Aorta (tissue), 5 donors: ENCODE measurements at regions of chr4 and their contacts with region 1.

Region 1: DNA sequence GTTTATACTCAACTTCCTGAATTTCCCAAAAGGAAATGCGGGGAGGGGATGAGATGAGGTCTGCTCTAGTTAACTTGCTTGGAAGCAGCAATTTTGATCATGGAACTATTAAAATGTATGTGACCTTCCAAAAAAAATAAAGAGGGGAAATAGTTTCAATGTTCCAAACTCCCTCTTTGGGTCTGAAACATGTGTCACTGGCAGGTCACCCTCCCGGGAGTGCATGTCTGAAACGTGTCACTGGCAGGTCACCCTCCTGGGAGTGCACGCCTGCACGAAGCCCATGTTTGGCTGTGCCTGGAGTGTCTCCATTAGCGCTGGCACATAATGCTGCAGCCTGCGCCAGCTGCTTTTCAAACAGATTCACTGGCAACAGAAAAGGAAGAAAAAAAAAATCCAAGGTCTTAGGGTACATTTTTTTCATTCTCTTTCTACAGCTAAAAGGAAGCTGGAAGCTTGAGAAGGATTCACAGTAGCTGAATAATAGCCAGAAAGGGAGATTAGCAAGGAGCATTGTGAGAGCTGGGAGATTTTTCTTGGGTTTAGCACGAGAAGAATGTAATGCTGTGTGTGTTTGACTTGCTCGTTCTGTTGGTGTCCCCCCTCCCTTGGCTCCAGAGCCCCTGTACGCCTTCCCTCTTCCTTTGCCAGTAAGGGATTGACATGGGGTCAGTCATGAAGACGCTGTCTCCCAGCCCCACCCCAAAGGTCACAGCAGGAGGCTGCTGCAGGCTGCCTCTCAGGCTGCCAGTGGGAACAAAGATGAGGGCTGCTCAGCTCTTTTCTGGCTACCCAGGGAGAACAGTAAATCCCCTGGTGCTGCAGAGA is 39.2 kb upstream of the TLR3 start:
- DNase-seq: peak; percentile 92 to 94
- ATAC-seq: peak; percentile 94
- H3K4me3 ChIP-seq: no peak overlapping the region
- H3K27ac ChIP-seq: peak overlapping the region; percentile 70 to 80
- H3K4me1 ChIP-seq: peaks cover 5 to 6% of the 10 kb centered on the region in 2 donors
- H3K27me3 ChIP-seq: no peaks in the 10 kb centered on the region

Region 2: DNA sequence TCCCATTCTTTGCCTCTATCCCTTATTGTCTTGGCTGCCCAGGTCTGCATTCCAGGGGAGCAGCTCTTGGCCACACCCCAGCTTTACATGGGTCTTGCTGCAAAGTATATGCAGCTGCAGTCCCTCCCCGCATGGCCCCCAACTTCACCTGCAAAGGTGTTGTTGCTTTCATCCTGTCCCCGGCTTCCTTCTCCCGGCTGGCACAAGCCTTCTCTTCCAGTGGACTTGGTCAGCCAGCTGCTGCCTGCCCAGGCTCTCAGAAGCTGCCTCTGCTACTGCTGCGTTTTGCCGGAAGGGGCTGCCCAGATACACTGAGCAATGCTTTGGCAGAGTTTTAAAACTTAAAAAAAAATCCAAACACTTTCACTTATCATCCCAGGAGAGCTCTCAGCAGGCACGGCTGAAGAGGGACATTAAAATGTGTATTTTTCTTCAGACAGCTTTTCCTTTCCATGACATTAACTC is 373.3 kb before region 1 on chr4:
- intact Hi-C with region 1: loop called in 1 of 2 experiments (anchors 5 kb)
- DNase-seq: peak; percentile 80 to 87
- ATAC-seq: peak; percentile 88
- H3K4me3 ChIP-seq: peak overlapping the region; percentile 68 to 75
- H3K27ac ChIP-seq: peak overlapping the region in 1 of 2 donors; percentile 77
- H3K4me1 ChIP-seq: peaks cover 3 to 4% of the 10 kb centered on the region in 2 donors
- H3K27me3 ChIP-seq: no peaks in the 10 kb centered on the region

Region 3: GRCh38 chr4:185738038-185738552 is 291.7 kb before region 1 on chr4:
- intact Hi-C with region 1: loop called (anchors 5 to 10 kb)
- DNase-seq: no peak
- ATAC-seq: peak; percentile 74
- H3K4me3 ChIP-seq: no peak overlapping the region
- H3K27ac ChIP-seq: peak overlapping the region; percentile 54 to 81
- H3K4me1 ChIP-seq: peaks cover 1 to 6% of the 10 kb centered on the region in 2 donors
- H3K27me3 ChIP-seq: no peaks in the 10 kb centered on the region

Region 4: DNA sequence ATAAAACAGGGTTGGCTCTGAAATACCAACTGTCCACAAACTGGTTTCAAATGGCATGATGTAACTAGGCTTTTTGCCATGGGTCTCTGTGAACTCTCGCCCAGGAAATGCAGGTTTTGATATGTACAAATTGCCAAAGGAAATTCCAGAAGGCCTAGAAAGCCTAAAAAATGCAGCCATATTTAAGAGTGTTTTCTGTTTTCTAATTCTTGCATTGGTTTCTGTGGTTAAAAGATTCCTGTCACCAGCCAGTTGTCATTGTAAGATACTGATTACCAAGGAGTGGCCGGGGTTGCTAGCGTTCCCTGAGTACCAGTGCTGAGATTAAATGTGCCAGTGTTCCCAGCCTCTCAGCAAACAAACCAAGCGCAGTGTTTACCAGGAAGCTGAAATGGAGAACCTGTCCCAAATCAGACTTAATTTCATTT is 163.9 kb before region 1 on chr4:
- intact Hi-C with region 1: loop called in 1 of 2 experiments (anchors 5 kb)
- DNase-seq: no peak
- ATAC-seq: no peak
- H3K4me3 ChIP-seq: no peak overlapping the region
- H3K27ac ChIP-seq: peak overlapping the region; percentile 6 to 56
- H3K4me1 ChIP-seq: peaks cover 0 to 9% of the 10 kb centered on the region in 2 donors
- H3K27me3 ChIP-seq: no peaks in the 10 kb centered on the region